ENCODE measurements at regions of chr7 and their contacts with region 1.

Region 1: DNA sequence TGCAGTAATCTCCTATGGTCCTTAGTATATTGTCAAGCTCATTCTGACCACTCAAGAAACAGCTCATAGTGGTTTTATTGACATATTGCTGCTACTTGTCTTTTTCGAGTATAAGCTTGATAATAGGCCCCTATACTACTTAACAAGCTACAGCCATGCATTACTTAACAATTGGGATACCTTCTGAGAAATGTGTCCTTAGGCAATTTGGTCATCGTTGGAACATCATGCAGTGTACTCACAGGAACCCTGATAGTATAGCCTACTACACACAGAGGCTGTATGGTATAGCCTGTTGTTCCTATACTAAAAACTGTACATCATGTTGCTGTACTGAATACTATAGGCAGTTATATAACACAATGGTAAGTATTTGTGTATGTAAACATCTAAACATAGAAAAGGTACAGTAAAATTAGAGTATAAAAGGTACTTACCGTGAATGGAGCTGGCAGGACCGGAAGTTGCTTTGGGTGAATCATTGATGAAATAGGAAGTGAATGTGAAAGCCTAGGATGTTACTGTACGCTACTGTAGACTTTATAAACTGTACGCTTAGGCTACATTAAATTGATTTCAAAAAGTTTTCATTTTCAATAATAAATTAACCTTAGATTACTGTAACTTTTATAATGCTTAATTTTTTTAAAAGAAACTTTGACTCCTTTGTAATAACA is 160.9 kb downstream of the LRRC4 start:
- DNase-seq: no peak
- H3K4me3 ChIP-seq: no peak overlapping the region
- H3K27ac ChIP-seq: no peak overlapping the region
- H3K4me1 ChIP-seq: no peaks in the 10 kb centered on the region
- H3K27me3 ChIP-seq: no peaks in the 10 kb centered on the region
- CTCF ChIP-seq: no peak
- EP300 ChIP-seq: no peak
- POLR2A ChIP-seq: no peak

Region 2: GRCh38 chr7:127995156-127995880 is 124.9 kb after region 1 on chr7:
- intact Hi-C with region 1: loop called in 1 of 4 experiments (anchors 5 kb)
- DNase-seq: peak in 1 of 5 donors; percentile 29
- H3K4me3 ChIP-seq: no peak overlapping the region
- H3K27ac ChIP-seq: peak overlapping the region in 1 of 2 donors; percentile 54
- H3K4me1 ChIP-seq: peaks cover 18% of the 10 kb centered on the region
- H3K27me3 ChIP-seq: no peaks in the 10 kb centered on the region
- CTCF ChIP-seq: no peak
- EP300 ChIP-seq: no peak
- POLR2A ChIP-seq: no peak

Region 3: GRCh38 chr7:128176696-128177095 is 306.3 kb after region 1 on chr7:
- intact Hi-C with region 1: no loop called
- DNase-seq: no peak
- H3K4me3 ChIP-seq: no peak overlapping the region
- H3K27ac ChIP-seq: no peak overlapping the region
- H3K4me1 ChIP-seq: no peaks in the 10 kb centered on the region
- H3K27me3 ChIP-seq: no peaks in the 10 kb centered on the region
- CTCF ChIP-seq: no peak
- EP300 ChIP-seq: no peak
- POLR2A ChIP-seq: no peak

Region 4: GRCh38 chr7:128862571-128863432 is 992.4 kb after region 1 on chr7 and contains the start of gene ATP6V1F:
- intact Hi-C with region 1: no loop called
- DNase-seq: peak; percentile 97 to 100 (median 99)
- H3K4me3 ChIP-seq: peak within 1 kb of the TSS; percentile 88
- H3K27ac ChIP-seq: peak within 1 kb of the TSS; percentile 28 to 36
- H3K4me1 ChIP-seq: peaks cover 10% of the 10 kb centered on the region
- H3K27me3 ChIP-seq: no peaks in the 10 kb centered on the region
- CTCF ChIP-seq: peak in 1 of 3 donors; percentile 15
- EP300 ChIP-seq: no peak
- POLR2A ChIP-seq: peak; percentile 65
- total RNA-seq, gene ATP6V1F: 57.3 to 108 (median 85.0) TPM

Measured in ovary (tissue), 10 donors.